A549 (cell line): ENCODE measurements at regions of chr7 and their contacts with region 1.

Region 1: DNA sequence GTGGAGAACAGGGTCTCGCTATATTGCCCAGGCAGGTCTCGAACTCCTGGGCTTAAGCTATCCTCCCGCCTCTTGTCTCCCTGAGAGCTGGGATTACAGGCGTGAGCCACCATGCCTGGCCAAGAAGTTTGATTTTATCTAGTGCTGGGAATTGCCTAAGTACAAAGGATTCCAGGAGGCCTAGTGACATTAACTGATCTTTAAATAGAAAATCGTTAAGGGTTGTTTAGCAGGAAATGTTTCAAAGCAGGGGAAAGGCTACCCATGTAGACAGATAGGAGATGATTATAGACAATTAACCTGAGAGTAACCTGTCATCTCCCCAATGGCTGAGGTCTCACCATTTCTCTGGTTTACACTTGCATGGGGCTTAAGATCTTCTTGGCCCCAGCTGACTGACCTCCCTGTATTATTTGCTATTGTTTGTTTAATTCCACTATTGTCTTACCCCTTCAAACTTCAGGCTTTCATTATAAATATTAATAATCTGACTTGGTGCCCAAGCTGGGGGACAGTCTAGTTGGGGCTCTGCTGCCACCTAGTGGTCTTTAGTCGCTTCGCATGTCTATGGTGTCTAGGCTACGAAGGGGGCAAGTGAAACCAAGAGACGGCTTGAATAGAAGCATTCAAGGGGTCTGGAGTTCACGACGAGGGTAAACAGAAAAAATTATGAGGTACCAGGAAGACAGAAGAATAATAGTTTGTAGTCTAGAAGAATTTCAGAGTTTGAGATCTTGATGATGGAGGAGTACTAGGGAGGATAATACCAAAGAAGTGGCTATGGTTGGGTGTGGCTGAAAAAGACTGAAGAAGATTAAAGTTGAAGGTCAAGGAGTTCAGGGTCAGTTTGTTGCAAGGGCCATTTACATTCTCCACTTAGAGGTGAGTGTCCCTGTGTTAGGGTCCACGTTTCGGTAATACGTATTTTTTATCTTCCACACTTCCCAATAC is 40.4 kb upstream of the BPGM start:
- DNase-seq: peak; percentile 62 to 81
- ATAC-seq: peak; percentile 89 to 94
- H3K4me3 ChIP-seq: no peak overlapping the region
- H3K27ac ChIP-seq: peak overlapping the region; percentile 64 to 82
- H3K4me1 ChIP-seq: peaks cover 47% of the 10 kb centered on the region
- CTCF ChIP-seq: peak; percentile 99
- EP300 ChIP-seq: no peak; a peak in 1 of 5 replicates
- POLR2A ChIP-seq: no peak
- RAD21 ChIP-seq: peak; percentile 100

Region 2: DNA sequence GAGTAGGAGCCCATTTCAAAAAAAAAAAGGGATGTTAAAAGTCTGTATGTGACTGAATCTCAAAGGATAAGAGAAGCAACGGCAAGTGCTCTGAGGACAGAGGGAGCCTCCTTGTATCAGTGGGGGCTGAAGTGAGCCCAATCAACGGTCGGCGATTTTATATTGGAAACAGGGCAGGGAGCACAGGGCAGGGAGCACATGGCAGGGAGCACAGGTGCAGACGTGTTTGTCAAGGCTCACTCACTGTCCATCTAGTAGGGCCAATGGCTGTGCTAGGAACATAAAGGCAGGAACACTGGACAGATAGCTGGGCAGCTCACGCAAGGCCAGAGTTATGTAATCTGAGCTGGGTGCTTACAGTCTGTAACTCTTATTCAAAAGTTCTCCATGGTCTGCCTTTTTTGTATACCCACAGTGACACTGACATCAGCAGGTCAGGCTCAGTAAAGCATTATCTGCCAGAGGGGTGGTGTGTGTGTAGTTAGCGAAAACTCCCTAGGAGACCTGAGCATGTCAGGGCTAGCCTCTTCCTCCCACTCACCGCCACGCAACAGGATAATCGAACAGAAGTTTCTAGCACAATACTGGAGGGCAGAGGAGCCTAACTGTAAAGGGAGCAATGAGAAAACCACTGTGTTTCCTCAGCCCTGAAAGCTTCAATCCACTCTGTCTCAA is 162.7 kb before region 1 on chr7:
- CTCF ChIA-PET with region 1: interaction called, 10 read pairs
- POLR2A ChIA-PET with region 1: no interaction called
- DNase-seq: no peak
- ATAC-seq: no peak
- H3K4me3 ChIP-seq: no peak overlapping the region
- H3K27ac ChIP-seq: peak overlapping the region; percentile 5 to 94; a peak in 4 of 6 replicates
- H3K4me1 ChIP-seq: peaks cover 44% of the 10 kb centered on the region
- CTCF ChIP-seq: no peak
- EP300 ChIP-seq: no peak
- POLR2A ChIP-seq: no peak
- RAD21 ChIP-seq: no peak

Region 3: DNA sequence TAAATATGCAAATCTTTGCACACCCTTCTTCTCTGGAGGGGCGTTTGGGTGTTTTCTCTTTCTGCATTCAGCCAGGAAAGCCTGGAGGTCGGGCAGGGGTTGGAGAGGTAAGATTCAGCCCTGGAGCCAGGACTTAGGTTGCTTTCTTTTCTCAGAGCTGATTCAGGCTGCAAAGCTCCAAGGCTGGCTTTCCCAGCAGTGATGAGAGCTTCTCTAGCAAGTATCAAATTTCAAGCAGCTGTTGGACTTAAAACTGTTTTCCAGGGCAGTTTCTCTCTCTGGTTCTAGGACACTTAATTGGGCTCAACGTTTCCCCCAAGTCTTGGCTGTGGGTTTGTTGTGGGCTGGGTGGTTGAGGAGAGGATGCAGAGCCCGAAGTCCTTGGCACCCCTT is 78.3 kb before region 1 on chr7:
- CTCF ChIA-PET with region 1: interaction called, 453 read pairs
- POLR2A ChIA-PET with region 1: interaction called, 7 read pairs
- DNase-seq: no peak
- ATAC-seq: peak in 1 of 2 experiments; percentile 9; a peak in 4 of 6 replicates
- H3K4me3 ChIP-seq: peak overlapping the region; percentile 84
- H3K27ac ChIP-seq: peak overlapping the region; percentile 91 to 98
- H3K4me1 ChIP-seq: peaks cover 54% of the 10 kb centered on the region
- CTCF ChIP-seq: no peak
- EP300 ChIP-seq: no peak
- POLR2A ChIP-seq: no peak; the same call in 1 of the 2 replicates
- RAD21 ChIP-seq: no peak

Region 4: DNA sequence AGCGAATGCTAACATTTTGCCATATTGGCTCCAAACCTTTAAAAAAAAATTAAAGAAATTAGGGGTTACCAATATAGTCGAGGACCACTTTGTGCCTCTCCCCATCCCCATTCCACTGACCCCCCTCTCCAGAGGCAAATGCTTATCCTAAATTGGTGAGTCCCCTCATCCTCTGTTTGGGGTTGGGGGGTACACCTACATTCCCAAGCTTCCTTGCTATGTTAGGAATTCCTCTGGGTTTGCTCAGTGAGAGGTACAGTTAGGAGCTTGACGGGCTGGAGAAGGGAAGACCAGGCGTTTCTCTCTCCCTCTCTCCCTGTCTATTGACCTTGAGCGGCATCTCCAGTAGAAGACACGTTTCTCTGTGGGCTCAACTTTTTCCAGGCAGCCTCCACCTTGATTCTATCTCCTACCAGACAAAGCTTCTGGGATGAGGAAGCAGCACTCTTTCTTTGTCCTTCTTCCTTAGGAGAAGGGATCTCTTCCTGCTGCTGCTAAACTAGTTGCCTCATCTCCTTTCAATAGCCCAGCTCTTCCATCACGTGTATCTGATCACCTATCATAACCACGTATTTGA is 64.0 kb before region 1 on chr7:
- CTCF ChIA-PET with region 1: interaction called, 92 read pairs
- POLR2A ChIA-PET with region 1: no interaction called
- DNase-seq: peak in 1 of 2 experiments; percentile 76
- ATAC-seq: peak; percentile 24 to 25
- H3K4me3 ChIP-seq: no peak overlapping the region
- H3K27ac ChIP-seq: peak overlapping the region; percentile 18 to 66; a peak in 5 of 6 replicates
- H3K4me1 ChIP-seq: peaks cover 86% of the 10 kb centered on the region
- CTCF ChIP-seq: no peak
- EP300 ChIP-seq: no peak
- POLR2A ChIP-seq: no peak
- RAD21 ChIP-seq: no peak

Region 5: GRCh38 chr7:134562136-134562535 is 44.1 kb before region 1 on chr7:
- CTCF ChIA-PET with region 1: interaction called, 63 read pairs
- POLR2A ChIA-PET with region 1: no interaction called
- DNase-seq: peak in 1 of 2 experiments; percentile 52
- ATAC-seq: peak in 1 of 2 experiments; percentile 47; a peak in 3 of 6 replicates
- H3K4me3 ChIP-seq: peak overlapping the region; percentile 16; the same call in 1 of the 3 replicates
- H3K27ac ChIP-seq: peak overlapping the region; percentile 91 to 96
- H3K4me1 ChIP-seq: peaks cover 22% of the 10 kb centered on the region
- CTCF ChIP-seq: no peak
- EP300 ChIP-seq: no peak
- POLR2A ChIP-seq: no peak
- RAD21 ChIP-seq: no peak